Activated naive CD8-positive, alpha-beta T cell treated with anti-CD3 and anti-CD28 coated beads, Interleukin-2, amount 10 ng/mL, durations not matched to agents 7 days and 5 days (primary cell): ENCODE measurements at regions of chr2 and their contacts with region 1.

Region 1: GRCh38 chr2:113203901-113204519 is 30.2 kb downstream of the PSD4 start:
- DNase-seq: peak; percentile 75
- ATAC-seq: peak; percentile 80
- H3K4me3 Mint-ChIP-seq: no peak overlapping the region
- H3K27ac Mint-ChIP-seq: peak overlapping the region; percentile 73
- H3K4me1 Mint-ChIP-seq: peaks cover 29% of the 10 kb centered on the region
- H3K27me3 Mint-ChIP-seq: no peaks in the 10 kb centered on the region

Region 2: GRCh38 chr2:113233593-113234550 is 29.9 kb after region 1 on chr2:
- POLR2A ChIA-PET with region 1: interaction called, 10 read pairs
- DNase-seq: no peak
- ATAC-seq: no peak
- H3K4me3 Mint-ChIP-seq: no peak overlapping the region
- H3K27ac Mint-ChIP-seq: no peak overlapping the region
- H3K4me1 Mint-ChIP-seq: peaks cover 34% of the 10 kb centered on the region
- H3K27me3 Mint-ChIP-seq: peaks cover 1% of the 10 kb centered on the region